Activated CD4-positive, alpha-beta T cell treated with anti-CD3 and anti-CD28 coated beads for 36 hours (primary cell): ENCODE measurements at regions of chr18 and their contacts with region 1.

Region 1: GRCh38 chr18:32552421-32553030 is 81.8 kb upstream of the GAREM1 start:
- DNase-seq: peak; percentile 71
- ATAC-seq: peak; percentile 68
- H3K4me3 Mint-ChIP-seq: no peak overlapping the region
- H3K27ac Mint-ChIP-seq: no peak overlapping the region
- H3K4me1 Mint-ChIP-seq: no peaks in the 10 kb centered on the region
- H3K27me3 Mint-ChIP-seq: peaks cover 16% of the 10 kb centered on the region

Region 2: GRCh38 chr18:31741097-31741735 is 811.3 kb before region 1 on chr18:
- CTCF ChIA-PET with region 1: no interaction called
- POLR2A ChIA-PET with region 1: no interaction called
- intact Hi-C with region 1: loop called in 1 of 2 experiments (anchors 2 kb)
- DNase-seq: peak; percentile 73
- ATAC-seq: no peak
- H3K4me3 Mint-ChIP-seq: no peak overlapping the region
- H3K27ac Mint-ChIP-seq: no peak overlapping the region
- H3K4me1 Mint-ChIP-seq: no peaks in the 10 kb centered on the region
- H3K27me3 Mint-ChIP-seq: no peaks in the 10 kb centered on the region

Region 3: GRCh38 chr18:32271672-32272208 is 280.8 kb before region 1 on chr18:
- CTCF ChIA-PET with region 1: interaction called, 27 read pairs
- POLR2A ChIA-PET with region 1: interaction called, 3 read pairs
- intact Hi-C with region 1: loop called (anchors 1 kb)
- DNase-seq: peak; percentile 41
- ATAC-seq: peak; percentile 53
- H3K4me3 Mint-ChIP-seq: no peak overlapping the region
- H3K27ac Mint-ChIP-seq: no peak overlapping the region
- H3K4me1 Mint-ChIP-seq: no peaks in the 10 kb centered on the region
- H3K27me3 Mint-ChIP-seq: peaks cover 11% of the 10 kb centered on the region

Region 4: GRCh38 chr18:32366586-32367538 is 185.7 kb before region 1 on chr18:
- CTCF ChIA-PET with region 1: no interaction called
- POLR2A ChIA-PET with region 1: no interaction called
- intact Hi-C with region 1: loop called in 1 of 2 experiments (anchors 10 kb)
- DNase-seq: no peak
- ATAC-seq: no peak
- H3K4me3 Mint-ChIP-seq: no peak overlapping the region
- H3K27ac Mint-ChIP-seq: no peak overlapping the region
- H3K4me1 Mint-ChIP-seq: no peaks in the 10 kb centered on the region
- H3K27me3 Mint-ChIP-seq: peaks cover 14% of the 10 kb centered on the region

Region 5: GRCh38 chr18:32470713-32471633 is 81.6 kb before region 1 on chr18 and contains the start of gene GAREM1:
- CTCF ChIA-PET with region 1: interaction called, 7 read pairs
- POLR2A ChIA-PET with region 1: no interaction called
- intact Hi-C with region 1: loop called in 1 of 2 experiments (anchors 5 kb)
- DNase-seq: peak; percentile 86
- ATAC-seq: peak; percentile 92
- H3K4me3 Mint-ChIP-seq: peak within 1 kb of the TSS; percentile 61
- H3K27ac Mint-ChIP-seq: no peak within 1 kb of the TSS
- H3K4me1 Mint-ChIP-seq: peaks cover 24% of the 10 kb centered on the region
- H3K27me3 Mint-ChIP-seq: peaks cover 37% of the 10 kb centered on the region
- total RNA-seq, gene GAREM1: not detected

Region 6: GRCh38 chr18:34364699-34365098 is 1812.2 kb after region 1 on chr18:
- CTCF ChIA-PET with region 1: no interaction called
- POLR2A ChIA-PET with region 1: no interaction called
- intact Hi-C with region 1: no loop called
- DNase-seq: no peak
- ATAC-seq: no peak
- H3K4me3 Mint-ChIP-seq: no peak overlapping the region
- H3K27ac Mint-ChIP-seq: no peak overlapping the region
- H3K4me1 Mint-ChIP-seq: no peaks in the 10 kb centered on the region
- H3K27me3 Mint-ChIP-seq: no peaks in the 10 kb centered on the region